Lower leg skin (tissue), 4 donors: ENCODE measurements at regions of chr7 and their contacts with region 1.

Region 1: GRCh38 chr7:151172273-151173141 is 5.0 kb upstream of the GBX1 start:
- DNase-seq: peak; percentile 59 to 96
- H3K4me3 ChIP-seq: no peak overlapping the region
- CTCF ChIP-seq: peak in 1 of 3 donors; percentile 98
- POLR2A ChIP-seq: no peak

Region 2: GRCh38 chr7:151123822-151124464 is 48.6 kb before region 1 on chr7:
- intact Hi-C with region 1: loop called (anchors 5 kb)
- DNase-seq: peak; percentile 79 to 96
- H3K4me3 ChIP-seq: no peak overlapping the region
- CTCF ChIP-seq: peak in 1 of 3 donors; percentile 89
- POLR2A ChIP-seq: no peak

Region 3: GRCh38 chr7:151304856-151305255 is 132.3 kb after region 1 on chr7:
- intact Hi-C with region 1: loop called (anchors 10 kb)
- DNase-seq: peak in 1 of 2 donors; percentile 3
- H3K4me3 ChIP-seq: no peak overlapping the region
- CTCF ChIP-seq: no peak
- POLR2A ChIP-seq: no peak

Region 4: GRCh38 chr7:151460474-151460855 is 288.0 kb after region 1 on chr7:
- intact Hi-C with region 1: no loop called
- DNase-seq: peak; percentile 49 to 90
- H3K4me3 ChIP-seq: no peak overlapping the region
- CTCF ChIP-seq: no peak
- POLR2A ChIP-seq: no peak

Region 5: DNA sequence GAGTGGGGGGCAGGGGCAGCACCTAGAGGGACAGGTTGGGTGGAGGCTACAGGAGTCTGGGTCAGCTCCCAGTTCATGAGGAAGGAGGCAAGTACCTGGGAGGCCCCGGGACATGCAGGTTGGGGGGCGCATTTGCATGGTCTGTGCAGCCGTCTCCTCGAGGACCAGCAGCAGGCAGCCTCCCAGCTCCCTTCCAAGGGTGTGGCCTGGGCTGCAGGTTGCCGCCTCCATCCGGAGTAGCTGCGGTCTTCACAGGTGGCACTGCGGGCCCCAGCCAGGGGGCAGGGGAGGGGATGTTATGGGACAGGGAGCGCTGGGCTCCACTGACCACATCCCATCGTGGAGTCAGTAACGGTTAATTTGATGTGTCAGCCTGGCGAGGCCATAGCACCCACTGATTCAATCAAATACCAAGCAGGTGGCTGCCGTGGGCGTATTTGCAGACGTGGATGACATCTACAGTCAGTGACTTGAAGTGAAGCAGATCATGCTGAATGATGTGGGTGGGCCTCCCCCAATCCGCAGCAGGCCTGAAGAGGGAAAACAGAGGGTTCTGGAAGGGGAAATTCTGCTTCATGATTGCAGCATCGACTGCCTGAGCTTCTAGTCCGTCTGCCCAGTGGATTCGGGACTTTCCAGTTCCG is 622.8 kb after region 1 on chr7:
- intact Hi-C with region 1: no loop called
- DNase-seq: no peak
- H3K4me3 ChIP-seq: no peak overlapping the region
- CTCF ChIP-seq: no peak
- POLR2A ChIP-seq: no peak